Heart right ventricle (tissue), 16 donors: ENCODE measurements at regions of chr14 and their contacts with region 1.

Region 1: DNA sequence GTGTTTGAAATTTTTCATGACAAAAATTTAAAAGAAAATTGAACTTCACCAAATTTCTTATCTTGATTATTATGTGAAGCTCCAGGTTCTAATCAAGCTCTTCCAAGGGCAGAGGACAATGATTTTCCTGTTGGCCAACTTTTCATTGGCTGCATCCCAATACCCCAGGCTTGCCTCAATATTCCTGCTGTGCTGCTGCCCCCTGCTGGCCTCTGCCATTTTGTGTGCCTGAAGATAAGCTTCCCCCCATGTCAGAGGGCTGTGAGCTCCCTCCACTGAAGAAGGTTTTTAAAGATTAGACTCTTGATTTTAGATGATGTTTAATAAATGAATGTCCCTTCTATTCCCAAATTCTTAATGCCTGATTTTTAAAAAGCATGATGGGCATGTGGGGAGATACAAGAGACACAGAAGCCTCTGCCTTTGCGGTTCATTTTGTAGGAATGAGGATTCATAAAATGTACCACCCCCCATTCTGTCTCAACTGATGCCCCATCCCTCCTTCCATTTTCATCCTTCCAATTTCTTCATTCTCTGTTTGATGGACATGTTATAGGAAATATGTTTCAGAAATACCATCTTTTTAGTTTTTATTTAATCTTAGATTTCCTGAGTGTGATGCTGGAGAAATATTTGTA is 76.7 kb upstream of the RGS6 start:
- DNase-seq: peak; percentile 67
- ATAC-seq: peak in 6 of 8 donors; percentile 59 to 75 (median 68)
- H3K4me3 ChIP-seq: no peak overlapping the region
- H3K27ac ChIP-seq: no peak overlapping the region
- H3K4me1 ChIP-seq: peaks cover 0 to 9% (median 4%) of the 10 kb centered on the region in 9 donors
- H3K27me3 ChIP-seq: no peaks in the 10 kb centered on the region
- CTCF ChIP-seq: peak; percentile 48 to 75 (median 66)

Region 2: DNA sequence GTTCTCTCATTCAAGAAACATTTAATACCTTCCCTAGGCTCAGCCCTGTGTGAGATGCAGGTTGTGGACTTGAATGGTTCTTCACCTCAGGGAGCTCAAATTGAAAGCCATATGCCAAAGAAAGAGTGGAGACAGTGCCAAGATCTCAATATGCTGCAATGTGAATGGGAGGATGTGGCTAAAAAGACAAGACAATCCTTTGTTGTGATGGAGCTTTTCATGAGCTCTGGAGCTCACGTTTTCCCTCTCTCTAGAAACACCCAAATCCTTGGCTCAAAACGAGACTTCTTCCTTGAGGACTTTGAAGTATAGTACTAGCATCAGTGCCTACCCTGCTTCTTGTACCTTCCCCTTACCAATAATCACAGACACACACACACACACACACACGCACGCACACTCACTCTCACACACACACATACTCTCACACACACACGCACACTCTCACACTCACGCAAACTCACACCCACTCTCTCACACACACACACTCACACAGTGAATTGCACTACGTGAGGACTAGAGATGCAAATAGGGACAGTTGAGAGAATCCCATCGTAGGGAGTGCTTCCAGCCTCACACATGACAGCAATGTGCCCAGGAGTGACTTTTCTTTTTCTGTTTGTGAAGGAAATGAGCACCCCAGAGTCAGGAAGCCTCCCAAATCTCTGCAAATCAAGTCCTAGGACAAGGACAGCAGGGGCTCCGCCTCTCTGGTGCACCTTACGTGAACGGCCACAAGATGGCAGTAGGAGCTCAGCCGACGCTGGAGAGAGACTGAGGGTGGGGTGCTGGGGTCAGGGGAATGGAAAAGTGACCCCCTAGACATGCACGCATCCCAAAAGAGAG is 716.8 kb before region 1 on chr14:
- intact Hi-C with region 1: loop called in 4 of 10 experiments (anchors 5 to 10 kb)
- DNase-seq: peak; percentile 31 to 44
- ATAC-seq: peak; percentile 63 to 88 (median 82)
- H3K4me3 ChIP-seq: peak overlapping the region in 1 of 10 donors; percentile 24
- H3K27ac ChIP-seq: no peak overlapping the region
- H3K4me1 ChIP-seq: peaks cover 0 to 33% (median 0%) of the 10 kb centered on the region in 9 donors
- H3K27me3 ChIP-seq: no peaks in the 10 kb centered on the region
- CTCF ChIP-seq: peak; percentile 89 to 98 (median 93)

Region 3: DNA sequence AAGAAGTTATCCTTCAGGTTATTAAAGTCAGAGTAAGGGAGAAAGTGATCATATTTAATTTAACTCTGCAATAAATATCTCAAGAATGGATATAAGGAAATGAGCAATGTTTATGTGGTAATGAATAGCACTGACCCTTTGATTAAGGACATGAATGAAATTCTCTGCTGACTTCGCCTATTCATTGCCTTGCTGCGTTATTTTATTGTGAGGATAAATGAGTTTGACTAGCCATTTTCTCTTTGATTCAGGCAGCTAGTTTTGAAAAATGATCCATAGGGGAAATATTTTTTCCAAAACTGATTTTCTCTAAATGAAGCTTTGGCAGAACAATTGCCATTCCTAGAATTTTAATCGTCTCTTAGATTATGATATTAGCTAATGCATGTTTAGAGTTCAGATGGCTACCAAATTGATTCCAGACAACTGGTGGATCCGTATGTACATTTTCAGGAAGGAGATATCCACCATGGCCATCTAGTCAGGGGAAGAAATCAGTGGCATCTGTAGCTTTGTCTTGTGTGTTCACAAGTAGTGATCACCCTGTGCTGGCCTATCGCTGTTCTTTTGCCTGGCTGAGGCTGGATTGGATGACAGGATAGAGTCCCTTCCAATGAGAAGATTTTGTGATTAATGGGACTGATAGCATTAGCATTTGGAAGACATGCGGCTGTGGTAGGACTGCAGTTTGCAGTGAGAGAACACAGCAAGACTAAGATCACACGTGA is 225.6 kb before region 1 on chr14:
- intact Hi-C with region 1: no loop called
- DNase-seq: no peak
- ATAC-seq: no peak
- H3K4me3 ChIP-seq: no peak overlapping the region
- H3K27ac ChIP-seq: no peak overlapping the region
- H3K4me1 ChIP-seq: no peaks in the 10 kb centered on the region
- H3K27me3 ChIP-seq: no peaks in the 10 kb centered on the region
- CTCF ChIP-seq: no peak

Region 4: GRCh38 chr14:71753126-71753830 is 102.2 kb before region 1 on chr14:
- intact Hi-C with region 1: loop called in 3 of 10 experiments (anchors 5 to 10 kb)
- DNase-seq: peak; percentile 89 to 96
- ATAC-seq: peak; percentile 81 to 94 (median 87)
- H3K4me3 ChIP-seq: peak overlapping the region in 3 of 10 donors; percentile 1 to 24 (median 18)
- H3K27ac ChIP-seq: peak overlapping the region in 1 of 10 donors; percentile 22
- H3K4me1 ChIP-seq: peaks cover 0 to 11% (median 10%) of the 10 kb centered on the region in 9 donors
- H3K27me3 ChIP-seq: no peaks in the 10 kb centered on the region
- CTCF ChIP-seq: peak; percentile 81 to 99 (median 95)